Heart right ventricle (tissue), 16 donors: ENCODE measurements at regions of chr15 and their contacts with region 1.

Region 1: GRCh38 chr15:70264014-70264582 is 166.4 kb upstream of the TLE3 start:
- DNase-seq: peak in 1 of 2 donors; percentile 46
- ATAC-seq: peak; percentile 26 to 80 (median 51)
- H3K4me3 ChIP-seq: peak overlapping the region in 1 of 10 donors; percentile 8
- H3K27ac ChIP-seq: peak overlapping the region in 5 of 10 donors; percentile 13 to 69 (median 29)
- H3K4me1 ChIP-seq: peaks cover 18 to 88% (median 61%) of the 10 kb centered on the region in 9 donors
- H3K27me3 ChIP-seq: no peaks in the 10 kb centered on the region
- CTCF ChIP-seq: no peak

Region 2: GRCh38 chr15:70077188-70078147 is 186.6 kb before region 1 on chr15:
- intact Hi-C with region 1: no loop called
- DNase-seq: peak in 1 of 2 donors; percentile 45
- ATAC-seq: peak; percentile 54 to 94 (median 77)
- H3K4me3 ChIP-seq: no peak overlapping the region
- H3K27ac ChIP-seq: no peak overlapping the region
- H3K4me1 ChIP-seq: peaks cover 0 to 44% (median 16%) of the 10 kb centered on the region in 9 donors
- H3K27me3 ChIP-seq: no peaks in the 10 kb centered on the region
- CTCF ChIP-seq: no peak

Region 3: DNA sequence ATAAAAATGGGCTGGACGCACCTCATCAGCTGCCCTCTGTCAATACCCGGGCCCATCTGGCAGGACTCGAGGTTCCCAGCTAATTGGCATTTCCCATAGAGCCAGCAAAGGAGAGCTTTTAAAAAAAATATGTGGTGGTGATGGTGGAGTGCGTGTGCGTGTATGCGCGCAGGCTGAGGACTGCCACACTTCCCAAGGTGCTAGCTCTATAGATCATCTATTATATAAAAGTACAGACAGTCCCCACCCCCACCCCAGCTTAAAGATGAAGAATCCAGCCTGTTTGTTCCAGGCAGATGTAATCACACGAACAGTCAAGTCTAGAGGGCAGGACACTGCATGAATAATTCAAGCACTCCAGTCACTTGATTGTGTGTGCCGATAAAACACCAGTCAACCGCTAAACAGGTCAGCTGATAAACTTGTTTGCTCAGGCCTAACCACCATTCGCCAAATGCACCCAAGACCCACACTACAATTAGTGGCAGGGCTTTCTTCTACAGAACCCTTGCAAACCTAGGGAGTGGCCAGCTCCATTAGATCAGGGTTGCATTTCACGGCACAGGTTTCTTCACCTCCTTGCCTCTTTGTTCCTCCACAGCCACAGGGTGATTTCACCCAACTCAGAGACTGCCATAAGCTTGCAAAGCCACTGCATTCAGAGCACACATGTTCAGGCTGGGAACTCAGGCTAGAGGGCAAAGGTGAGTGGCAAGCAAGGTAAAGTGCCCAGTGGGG is 172.2 kb before region 1 on chr15:
- intact Hi-C with region 1: loop called in 3 of 10 experiments (anchors 5 to 10 kb)
- DNase-seq: no peak
- ATAC-seq: no peak
- H3K4me3 ChIP-seq: no peak overlapping the region
- H3K27ac ChIP-seq: no peak overlapping the region
- H3K4me1 ChIP-seq: peaks cover 13 to 90% (median 79%) of the 10 kb centered on the region in 9 donors
- H3K27me3 ChIP-seq: peaks cover 0 to 4% (median 0%) of the 10 kb centered on the region in 7 donors
- CTCF ChIP-seq: no peak

Region 4: DNA sequence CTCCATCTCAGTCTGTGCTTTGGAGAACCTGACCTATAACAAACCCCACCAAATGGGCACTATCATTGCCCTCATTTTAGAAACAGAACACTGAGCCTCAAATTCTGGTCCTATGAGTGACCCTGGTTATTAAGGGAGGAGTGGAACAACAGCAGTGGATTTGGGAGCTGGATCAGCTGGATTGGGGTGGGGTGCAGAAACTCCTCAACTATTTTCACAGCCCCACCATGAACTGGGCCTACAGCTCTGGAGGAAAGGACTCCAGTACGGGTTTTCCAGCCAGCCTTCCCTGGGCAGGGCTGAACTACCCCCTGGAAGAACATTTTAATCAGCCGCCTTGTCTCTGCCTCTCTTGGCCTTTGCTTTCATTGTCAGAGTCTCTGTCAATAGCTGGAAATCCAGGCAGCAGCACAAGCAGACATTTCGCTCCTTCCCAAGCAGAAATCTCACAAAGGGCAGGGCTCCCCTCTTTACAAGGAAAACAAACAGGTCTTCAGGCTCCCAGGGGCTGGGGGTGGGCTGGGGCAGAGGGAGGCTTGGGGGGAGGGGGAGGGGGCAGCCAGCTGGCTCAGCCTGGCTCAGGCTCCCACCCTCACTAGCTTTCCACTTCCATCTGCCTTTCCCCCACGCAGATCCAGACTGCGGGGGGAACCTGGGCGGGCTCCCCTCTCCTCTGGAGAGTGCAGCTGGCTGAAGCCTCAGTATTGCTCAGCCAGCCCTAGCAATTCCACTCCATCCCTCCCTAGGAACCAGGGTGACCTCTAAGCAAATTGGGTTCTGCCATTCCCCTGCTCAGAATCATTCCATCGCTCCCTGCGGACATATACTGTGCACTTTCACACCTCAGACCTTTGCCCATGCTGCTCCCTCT is 152.7 kb before region 1 on chr15:
- intact Hi-C with region 1: loop called in 3 of 10 experiments (anchors 10 kb)
- DNase-seq: peak; percentile 63 to 90
- ATAC-seq: peak; percentile 92 to 98 (median 94)
- H3K4me3 ChIP-seq: peak overlapping the region in 9 of 10 donors; percentile 1 to 39 (median 29)
- H3K27ac ChIP-seq: peak overlapping the region; percentile 72 to 94 (median 88)
- H3K4me1 ChIP-seq: peaks cover 8 to 40% (median 22%) of the 10 kb centered on the region in 9 donors
- H3K27me3 ChIP-seq: peaks cover 0 to 3% (median 0%) of the 10 kb centered on the region in 7 donors
- CTCF ChIP-seq: no peak